Endothelial cell of umbilical vein (primary cell): ENCODE measurements at regions of chr5 and their contacts with region 1.

Region 1: DNA sequence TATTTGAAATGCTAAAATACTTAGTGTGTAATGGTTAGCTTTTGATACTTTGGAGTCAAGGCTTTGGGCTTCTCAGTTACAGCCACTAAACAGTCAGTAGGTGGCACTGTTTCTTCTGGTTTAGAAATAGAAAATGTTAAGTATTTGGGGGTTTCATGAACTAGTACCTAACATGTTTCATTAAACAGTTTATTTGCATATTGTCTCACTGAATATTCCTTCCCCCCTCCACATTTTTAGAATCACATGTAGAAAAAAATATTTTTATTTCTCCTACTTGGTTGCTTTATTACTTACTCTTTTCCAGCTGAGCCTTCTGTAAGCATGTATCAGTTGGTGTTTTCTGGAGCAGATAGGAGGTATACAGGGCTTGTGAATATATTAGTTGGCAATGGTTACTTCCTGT is 48.0 kb downstream of the IPO11 start:
- DNase-seq: peak; percentile 67
- H3K4me3 ChIP-seq: no peak overlapping the region
- H3K27ac ChIP-seq: no peak overlapping the region
- H3K4me1 ChIP-seq: peaks cover 3% of the 10 kb centered on the region
- H3K27me3 ChIP-seq: no peaks in the 10 kb centered on the region
- CTCF ChIP-seq: peak; percentile 59 to 68
- POLR2A ChIP-seq: no peak

Region 2: GRCh38 chr5:62450259-62450658 is 10.3 kb before region 1 on chr5:
- CTCF ChIA-PET with region 1: interaction called, 34 read pairs
- POLR2A ChIA-PET with region 1: no interaction called
- dilution Hi-C with region 1: no loop called
- intact Hi-C with region 1: no loop called
- DNase-seq: no peak
- H3K4me3 ChIP-seq: no peak overlapping the region
- H3K27ac ChIP-seq: no peak overlapping the region
- H3K4me1 ChIP-seq: no peaks in the 10 kb centered on the region
- H3K27me3 ChIP-seq: no peaks in the 10 kb centered on the region
- CTCF ChIP-seq: no peak
- POLR2A ChIP-seq: no peak

Region 3: DNA sequence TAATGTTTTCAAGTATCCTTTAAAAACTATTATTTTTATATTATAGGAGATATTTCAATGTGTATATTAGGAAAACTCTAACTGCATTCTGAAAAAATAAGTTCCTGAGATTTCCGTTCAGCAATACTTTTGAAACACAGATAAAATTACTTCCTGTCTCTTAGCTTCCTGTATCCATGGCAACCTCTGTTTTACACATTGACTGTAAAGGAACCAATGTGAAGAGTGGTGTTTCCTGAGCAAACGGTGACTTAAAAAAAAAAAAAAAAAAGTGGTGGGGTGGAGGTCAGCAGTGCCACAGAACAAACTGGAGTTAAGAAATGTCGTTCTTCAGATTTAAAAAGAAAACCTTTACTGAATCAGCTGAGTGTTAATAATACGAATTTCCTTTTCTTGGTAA is 118.0 kb after region 1 on chr5 and contains the start of gene LRRC70:
- CTCF ChIA-PET with region 1: interaction called, 31 read pairs
- POLR2A ChIA-PET with region 1: no interaction called
- dilution Hi-C with region 1: no loop called
- intact Hi-C with region 1: loop called (anchors 2 kb)
- DNase-seq: peak; percentile 93
- H3K4me3 ChIP-seq: peak within 1 kb of the TSS; percentile 51 to 99 (median 95)
- H3K27ac ChIP-seq: peak within 1 kb of the TSS; percentile 88
- H3K4me1 ChIP-seq: peaks cover 73% of the 10 kb centered on the region
- H3K27me3 ChIP-seq: no peaks in the 10 kb centered on the region
- CTCF ChIP-seq: no peak
- POLR2A ChIP-seq: no peak
- total RNA-seq, gene LRRC70: 24.5 and 26.5 TPM in 2 replicates

Region 4: GRCh38 chr5:62600560-62601252 is 140.1 kb after region 1 on chr5:
- CTCF ChIA-PET with region 1: interaction called, 12 read pairs
- POLR2A ChIA-PET with region 1: no interaction called
- dilution Hi-C with region 1: no loop called
- intact Hi-C with region 1: no loop called
- DNase-seq: peak; percentile 53
- H3K4me3 ChIP-seq: no peak overlapping the region
- H3K27ac ChIP-seq: no peak overlapping the region
- H3K4me1 ChIP-seq: peaks cover 3% of the 10 kb centered on the region
- H3K27me3 ChIP-seq: no peaks in the 10 kb centered on the region
- CTCF ChIP-seq: no peak
- POLR2A ChIP-seq: no peak

Region 5: GRCh38 chr5:62643556-62644451 is 183.2 kb after region 1 on chr5:
- CTCF ChIA-PET with region 1: interaction called, 20 read pairs
- POLR2A ChIA-PET with region 1: no interaction called
- dilution Hi-C with region 1: no loop called
- intact Hi-C with region 1: no loop called
- DNase-seq: no peak
- H3K4me3 ChIP-seq: no peak overlapping the region
- H3K27ac ChIP-seq: no peak overlapping the region
- H3K4me1 ChIP-seq: no peaks in the 10 kb centered on the region
- H3K27me3 ChIP-seq: no peaks in the 10 kb centered on the region
- CTCF ChIP-seq: no peak
- POLR2A ChIP-seq: no peak

Region 6: GRCh38 chr5:62771341-62771740 is 310.8 kb after region 1 on chr5:
- CTCF ChIA-PET with region 1: interaction called, 132 read pairs
- POLR2A ChIA-PET with region 1: no interaction called
- dilution Hi-C with region 1: no loop called
- intact Hi-C with region 1: no loop called
- DNase-seq: no peak
- H3K4me3 ChIP-seq: no peak overlapping the region
- H3K27ac ChIP-seq: no peak overlapping the region
- H3K4me1 ChIP-seq: no peaks in the 10 kb centered on the region
- H3K27me3 ChIP-seq: no peaks in the 10 kb centered on the region
- CTCF ChIP-seq: no peak
- POLR2A ChIP-seq: no peak

Region 7: GRCh38 chr5:63125862-63126261 is 665.3 kb after region 1 on chr5:
- CTCF ChIA-PET with region 1: no interaction called
- POLR2A ChIA-PET with region 1: no interaction called
- dilution Hi-C with region 1: no loop called
- intact Hi-C with region 1: loop called (anchors 10 kb)
- DNase-seq: peak; percentile 26
- H3K4me3 ChIP-seq: no peak overlapping the region
- H3K27ac ChIP-seq: no peak overlapping the region
- H3K4me1 ChIP-seq: no peaks in the 10 kb centered on the region
- H3K27me3 ChIP-seq: no peaks in the 10 kb centered on the region
- CTCF ChIP-seq: peak; percentile 24 to 40
- POLR2A ChIP-seq: no peak

Region 8: DNA sequence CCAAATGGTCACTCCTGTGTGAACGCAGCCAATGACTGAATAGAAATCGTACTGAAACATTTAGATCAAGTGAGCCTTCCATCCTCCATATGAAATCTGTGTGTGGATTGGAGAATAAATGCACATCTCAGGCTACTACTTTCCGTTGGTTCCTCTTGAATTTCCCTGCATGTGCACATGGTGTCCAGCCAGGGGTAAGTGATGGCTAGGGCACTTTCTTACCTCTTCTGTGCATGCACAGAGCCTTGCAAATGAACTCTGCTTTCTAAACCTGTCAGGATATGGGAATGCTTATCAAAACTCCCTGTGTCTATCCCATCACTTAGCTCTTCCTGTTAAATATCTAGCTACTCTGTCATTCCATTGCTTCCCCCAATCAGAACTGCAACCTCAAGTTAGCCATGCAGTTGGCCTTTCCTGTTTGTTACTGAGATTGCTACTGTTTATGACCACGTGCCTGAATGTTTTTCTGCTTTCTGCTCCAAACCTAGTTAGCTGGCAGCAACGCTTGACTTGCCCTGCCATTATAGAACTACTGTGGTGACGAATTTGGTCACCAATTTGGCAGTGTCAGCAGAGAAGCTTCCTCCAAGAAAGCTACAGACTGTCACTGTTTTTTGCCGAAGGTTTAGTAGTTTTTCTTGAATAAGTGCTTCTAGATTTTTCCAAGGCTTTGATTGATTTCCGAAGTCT is 779.6 kb after region 1 on chr5:
- CTCF ChIA-PET with region 1: no interaction called
- POLR2A ChIA-PET with region 1: no interaction called
- dilution Hi-C with region 1: no loop called
- intact Hi-C with region 1: no loop called
- DNase-seq: no peak
- H3K4me3 ChIP-seq: no peak overlapping the region
- H3K27ac ChIP-seq: no peak overlapping the region
- H3K4me1 ChIP-seq: no peaks in the 10 kb centered on the region
- H3K27me3 ChIP-seq: no peaks in the 10 kb centered on the region
- CTCF ChIP-seq: no peak
- POLR2A ChIP-seq: no peak